ENCODE measurements at regions of chr11 and their contacts with region 1.

Region 1: DNA sequence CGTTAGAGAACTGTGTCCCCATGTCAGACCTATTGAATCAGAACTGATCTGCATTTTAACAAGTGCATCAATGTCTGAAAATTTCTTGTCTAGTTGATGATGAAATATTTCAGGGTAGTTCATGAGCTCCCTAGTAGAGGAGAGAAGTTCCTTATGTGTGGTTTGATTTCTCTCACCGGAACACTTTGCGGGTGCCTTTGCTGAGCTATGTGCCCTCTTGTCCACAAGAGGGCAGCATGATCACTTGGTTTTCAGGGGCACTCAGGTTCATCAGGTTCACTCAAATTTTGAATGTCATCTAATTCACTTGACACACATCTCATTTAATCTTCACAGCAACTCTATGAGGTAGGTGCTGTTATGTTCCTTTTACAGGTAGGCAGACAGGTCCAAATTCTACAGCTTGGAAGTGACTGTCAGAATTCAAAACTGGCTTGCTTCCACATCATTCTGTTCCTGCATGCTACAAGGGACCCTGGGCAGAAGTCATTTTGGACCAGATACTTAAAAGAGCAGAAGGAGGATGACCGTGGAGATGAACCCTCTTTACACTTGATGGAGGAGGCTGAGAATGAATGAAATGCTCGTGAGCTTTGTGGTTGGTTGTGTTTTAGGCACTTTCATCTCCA is 55.6 kb downstream of the P4HA3 start:
- DNase-seq: peak in 3 of 5 donors; percentile 22 to 47 (median 41)
- ATAC-seq: peak in 3 of 4 donors; percentile 50 to 70 (median 55)
- H3K4me3 ChIP-seq: no peak overlapping the region
- H3K27ac ChIP-seq: no peak overlapping the region
- H3K4me1 ChIP-seq: peaks cover 0 to 13% (median 0%) of the 10 kb centered on the region in 12 donors
- H3K27me3 ChIP-seq: no peaks in the 10 kb centered on the region
- CTCF ChIP-seq: peak; percentile 81 to 95 (median 90)
- POLR2A ChIP-seq: no peak

Region 2: GRCh38 chr11:74321487-74322188 is 65.8 kb after region 1 on chr11:
- intact Hi-C with region 1: loop called in 8 of 10 experiments (anchors 2 to 10 kb)
- DNase-seq: no peak
- ATAC-seq: peak in 2 of 4 donors; percentile 19 to 38
- H3K4me3 ChIP-seq: no peak overlapping the region
- H3K27ac ChIP-seq: peak overlapping the region in 1 of 12 donors; percentile 4
- H3K4me1 ChIP-seq: peaks cover 0 to 45% (median 27%) of the 10 kb centered on the region in 12 donors
- H3K27me3 ChIP-seq: no peaks in the 10 kb centered on the region
- CTCF ChIP-seq: peak; percentile 34 to 58 (median 48)
- POLR2A ChIP-seq: no peak

Region 3: DNA sequence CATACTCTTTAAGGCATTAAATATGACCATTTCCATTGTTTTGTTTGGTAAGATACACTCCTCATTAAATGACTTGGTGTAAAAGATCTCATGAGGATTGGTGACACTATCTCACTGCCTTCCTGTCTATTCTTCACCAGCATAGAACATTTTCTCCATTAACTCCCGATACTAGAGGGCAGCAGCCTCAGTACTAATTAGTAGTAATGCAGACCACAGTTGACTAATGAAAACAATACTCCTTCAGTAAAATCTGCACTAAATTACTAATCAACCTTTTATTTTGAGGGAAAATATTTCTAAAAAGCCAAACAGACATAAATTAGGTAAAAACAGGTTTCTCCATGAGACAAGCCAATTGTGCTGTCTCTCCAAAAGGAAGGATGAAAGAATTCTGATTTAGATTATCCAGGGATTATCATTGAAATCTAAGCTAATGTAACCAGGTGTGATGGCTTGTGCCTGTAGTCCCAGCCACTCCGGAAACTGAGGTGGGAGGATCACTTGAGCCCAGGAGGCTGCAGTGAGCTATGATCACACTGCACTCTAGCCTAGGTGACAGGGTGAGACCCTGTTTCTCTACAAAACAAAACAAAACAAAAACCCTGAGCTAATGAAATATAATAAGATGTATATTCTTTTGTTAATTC is 132.9 kb after region 1 on chr11:
- intact Hi-C with region 1: loop called in 2 of 10 experiments (anchors 5 kb)
- DNase-seq: peak in 4 of 5 donors; percentile 22 to 48 (median 38)
- ATAC-seq: peak in 3 of 4 donors; percentile 69 to 81 (median 74)
- H3K4me3 ChIP-seq: no peak overlapping the region
- H3K27ac ChIP-seq: no peak overlapping the region
- H3K4me1 ChIP-seq: peaks cover 0 to 5% (median 0%) of the 10 kb centered on the region in 12 donors
- H3K27me3 ChIP-seq: no peaks in the 10 kb centered on the region
- CTCF ChIP-seq: peak; percentile 54 to 85 (median 72)
- POLR2A ChIP-seq: no peak

Region 4: DNA sequence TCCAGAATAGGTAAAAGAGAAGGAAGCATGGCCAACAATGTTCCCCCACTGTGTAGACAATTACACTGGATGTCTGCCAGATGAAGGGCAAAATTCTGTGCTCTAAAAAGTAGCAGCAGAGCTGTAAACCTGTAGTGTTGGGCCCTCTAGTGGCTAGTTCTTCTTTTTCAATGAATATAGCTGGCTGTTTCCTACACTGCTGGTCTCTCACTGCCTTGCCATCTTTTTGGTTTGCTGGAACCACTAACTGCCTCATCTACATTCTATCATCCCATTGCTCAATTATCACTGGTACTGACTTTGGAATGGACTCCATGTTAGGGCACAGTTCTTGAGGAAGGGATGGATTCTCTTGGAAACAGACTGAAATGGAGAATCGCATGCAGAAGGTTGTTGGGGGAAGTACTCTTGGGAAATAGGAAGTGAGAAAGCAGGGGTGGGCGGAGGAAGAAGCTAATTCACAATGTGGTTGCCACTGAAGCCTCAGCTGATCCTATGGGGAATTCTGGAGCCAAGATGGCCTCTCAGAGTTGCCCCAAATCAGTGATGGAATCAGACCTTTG is 193.6 kb after region 1 on chr11:
- intact Hi-C with region 1: loop called (anchors 1 to 5 kb)
- DNase-seq: peak in 2 of 5 donors; percentile 53 to 70
- ATAC-seq: peak; percentile 82 to 89 (median 87)
- H3K4me3 ChIP-seq: no peak overlapping the region
- H3K27ac ChIP-seq: no peak overlapping the region
- H3K4me1 ChIP-seq: peaks cover 0 to 6% (median 0%) of the 10 kb centered on the region in 12 donors
- H3K27me3 ChIP-seq: peaks cover 0 to 6% (median 0%) of the 10 kb centered on the region in 9 donors
- CTCF ChIP-seq: peak; percentile 48 to 83 (median 77)
- POLR2A ChIP-seq: no peak

Region 5: DNA sequence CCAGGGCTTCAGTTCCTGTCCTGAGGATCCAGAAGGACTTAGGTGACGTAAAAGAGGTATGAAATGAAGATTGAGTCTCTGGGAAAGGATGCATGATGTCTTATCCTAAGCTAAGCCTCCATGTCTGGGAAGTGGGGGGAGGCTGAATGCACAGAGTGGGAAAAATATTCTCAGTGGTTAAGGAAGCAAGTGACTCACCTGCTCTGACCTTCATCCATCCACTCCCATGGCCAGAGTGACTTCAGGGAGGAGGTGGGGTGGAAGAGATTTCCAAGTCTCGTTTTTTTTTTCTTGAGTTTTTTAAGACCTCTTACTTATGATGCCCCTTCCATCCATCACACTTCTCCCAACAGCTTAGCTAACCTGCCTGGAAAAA is 304.1 kb after region 1 on chr11:
- intact Hi-C with region 1: loop called in 2 of 10 experiments (anchors 5 to 10 kb)
- DNase-seq: no peak
- ATAC-seq: peak in 1 of 4 donors; percentile 54
- H3K4me3 ChIP-seq: no peak overlapping the region
- H3K27ac ChIP-seq: peak overlapping the region in 3 of 12 donors; percentile 46 to 69 (median 50)
- H3K4me1 ChIP-seq: peaks cover 0 to 12% (median 0%) of the 10 kb centered on the region in 12 donors
- H3K27me3 ChIP-seq: no peaks in the 10 kb centered on the region
- CTCF ChIP-seq: no peak
- POLR2A ChIP-seq: no peak

Region 6: GRCh38 chr11:74570266-74571061 is 314.6 kb after region 1 on chr11:
- intact Hi-C with region 1: loop called in 9 of 10 experiments (anchors 2 to 10 kb)
- DNase-seq: peak in 4 of 5 donors; percentile 13 to 36 (median 32)
- ATAC-seq: peak in 3 of 4 donors; percentile 70 to 87 (median 85)
- H3K4me3 ChIP-seq: no peak overlapping the region
- H3K27ac ChIP-seq: no peak overlapping the region
- H3K4me1 ChIP-seq: no peaks in the 10 kb centered on the region
- H3K27me3 ChIP-seq: no peaks in the 10 kb centered on the region
- CTCF ChIP-seq: peak; percentile 60 to 77 (median 70)
- POLR2A ChIP-seq: no peak

Region 7: DNA sequence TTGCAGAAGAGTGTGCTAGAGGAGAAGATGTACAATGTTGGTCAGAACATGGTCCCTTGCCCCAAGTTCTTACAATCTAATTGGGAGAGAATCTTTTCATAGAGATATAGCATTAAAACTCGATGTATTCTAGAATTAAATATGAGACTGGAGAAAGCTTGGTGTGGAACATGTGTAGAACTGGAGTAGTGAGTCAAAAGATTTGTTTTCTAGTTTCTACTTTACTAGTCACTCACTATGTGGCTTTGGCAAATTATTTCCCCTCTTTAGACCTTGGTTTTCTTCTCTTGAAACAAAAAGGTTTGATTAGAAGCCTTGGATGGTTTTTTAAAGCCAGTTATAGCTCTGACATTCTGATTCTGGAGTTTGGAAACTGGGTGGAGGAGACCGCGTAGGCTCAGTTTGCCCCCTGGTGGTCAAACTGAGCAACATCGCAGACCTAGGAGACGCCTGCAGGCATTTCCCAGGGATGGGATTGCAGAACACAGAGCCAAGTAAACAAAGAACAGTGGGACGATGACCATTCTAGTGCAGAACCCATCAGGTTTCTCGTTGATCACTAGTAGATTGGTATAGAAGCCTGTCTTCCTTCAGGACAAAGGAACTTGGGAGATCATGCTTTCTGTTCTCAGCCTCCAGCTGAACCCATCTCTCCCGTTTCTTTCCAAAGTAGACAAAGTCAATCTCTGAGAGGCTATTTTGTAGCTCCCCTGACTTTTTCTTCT is 483.9 kb after region 1 on chr11:
- intact Hi-C with region 1: loop called in 1 of 10 experiments (anchors 10 kb)
- DNase-seq: peak in 2 of 5 donors; percentile 47 to 58
- ATAC-seq: peak; percentile 79 to 91 (median 88)
- H3K4me3 ChIP-seq: no peak overlapping the region
- H3K27ac ChIP-seq: no peak overlapping the region
- H3K4me1 ChIP-seq: peaks cover 0 to 6% (median 0%) of the 10 kb centered on the region in 12 donors
- H3K27me3 ChIP-seq: peaks cover 0 to 7% (median 0%) of the 10 kb centered on the region in 9 donors
- CTCF ChIP-seq: peak; percentile 81 to 93 (median 90)
- POLR2A ChIP-seq: no peak

Measured in heart left ventricle (tissue), 16 donors.